MCF 10A (cell line): ENCODE measurements at regions of chr11 and their contacts with region 1.

Region 1: DNA sequence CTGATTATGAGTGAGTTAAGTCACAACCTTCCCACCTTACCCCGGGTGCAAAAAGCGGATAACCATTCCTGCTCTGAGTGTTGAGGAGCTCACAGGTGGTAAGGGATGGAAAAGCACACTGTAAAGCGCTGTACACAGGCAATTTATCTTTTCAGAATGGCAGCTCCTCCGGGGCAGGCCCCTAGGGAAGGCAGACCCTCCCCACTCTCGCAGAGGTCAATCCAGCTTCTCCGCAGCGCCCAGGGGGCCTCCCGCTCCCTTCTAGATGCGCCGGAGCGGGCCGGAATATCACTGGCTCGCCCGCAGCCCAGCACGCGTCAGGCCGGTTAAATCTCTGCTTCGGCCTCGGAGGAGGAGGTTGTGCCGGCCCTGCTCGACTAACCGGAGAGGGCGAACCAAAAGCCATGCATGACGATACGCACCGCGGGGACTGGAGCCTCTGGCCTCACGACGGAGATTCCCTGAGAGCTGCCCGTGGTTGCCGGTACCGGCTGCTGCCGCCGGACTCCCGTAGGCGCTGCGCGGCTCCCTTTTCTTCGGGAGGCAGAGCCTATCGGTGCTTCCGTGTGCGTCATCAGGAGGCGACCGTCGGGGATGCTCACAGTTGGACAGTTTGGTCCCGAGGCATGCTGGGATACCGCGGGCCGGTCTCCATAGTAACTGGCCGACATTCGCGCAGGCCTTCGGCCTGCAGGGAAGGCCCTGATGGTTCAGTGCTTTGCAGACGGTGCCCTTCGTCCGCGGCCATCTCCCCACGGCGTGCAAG is at the start of gene BRMS1:
- DNase-seq: peak; percentile 97
- H3K4me3 Mint-ChIP-seq: peak within 1 kb of the TSS; percentile 93
- H3K27ac Mint-ChIP-seq: peak within 1 kb of the TSS; percentile 93
- H3K4me1 Mint-ChIP-seq: peaks cover 23% of the 10 kb centered on the region
- H3K27me3 Mint-ChIP-seq: no peaks in the 10 kb centered on the region
- CTCF ChIP-seq: no peak
- total RNA-seq, gene BRMS1: 53.2 and 55.4 TPM in 2 replicates

Region 2: GRCh38 chr11:66268283-66268951 is 76.3 kb before region 1 on chr11 and contains the start of gene RAB1B:
- CTCF ChIA-PET with region 1: no interaction called
- POLR2A ChIA-PET with region 1: interaction called, 12 read pairs
- intact Hi-C with region 1: no loop called
- DNase-seq: peak; percentile 100
- H3K4me3 Mint-ChIP-seq: peak within 1 kb of the TSS; percentile 96
- H3K27ac Mint-ChIP-seq: peak within 1 kb of the TSS; percentile 91
- H3K4me1 Mint-ChIP-seq: peaks cover 2% of the 10 kb centered on the region
- H3K27me3 Mint-ChIP-seq: no peaks in the 10 kb centered on the region
- CTCF ChIP-seq: no peak
- total RNA-seq, gene RAB1B: 73.4 and 87.0 TPM in 2 replicates

Region 3: DNA sequence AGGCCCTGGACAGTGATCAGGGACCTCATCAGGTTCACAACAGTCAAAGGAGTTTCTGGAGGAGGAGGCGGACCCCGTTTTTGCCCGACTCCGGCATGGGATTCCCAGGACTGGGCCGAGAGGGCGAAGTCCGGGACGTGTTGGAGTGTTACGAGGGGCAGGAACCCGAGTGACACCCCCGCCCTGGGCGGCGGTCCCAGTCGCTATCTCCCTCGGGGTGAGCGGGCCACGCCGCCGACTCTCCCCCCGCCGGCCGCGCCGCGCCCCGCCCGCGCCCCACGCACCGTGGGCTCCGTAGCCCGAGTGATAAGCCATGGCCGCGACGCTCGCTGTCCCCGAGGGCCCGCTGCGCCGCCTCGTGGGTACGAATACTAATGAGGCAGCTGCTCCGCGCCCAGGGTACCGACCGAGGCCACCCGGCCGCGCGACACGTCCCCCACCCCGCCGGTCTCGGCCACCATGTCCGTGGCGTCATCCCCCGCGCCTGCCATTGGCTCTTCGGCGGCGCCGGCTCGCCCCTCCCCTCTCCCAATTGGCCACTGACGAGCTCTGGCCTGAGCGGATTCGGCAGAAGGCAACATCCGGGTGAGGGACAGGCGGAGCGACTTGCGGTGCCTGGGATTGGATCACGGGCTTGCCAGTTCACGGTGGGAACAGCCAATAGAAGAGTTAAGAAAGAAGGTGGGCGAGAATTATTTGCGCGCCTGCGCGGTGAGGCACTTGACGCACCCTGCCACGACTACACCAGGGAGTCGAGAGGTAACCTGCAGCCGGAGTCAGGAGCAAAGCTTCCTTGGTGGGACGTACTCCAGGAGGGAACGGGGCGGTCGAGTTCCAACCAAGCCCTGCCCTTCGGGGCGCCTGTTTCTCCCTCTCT is 55.8 kb before region 1 on chr11 and contains the start of gene YIF1A:
- CTCF ChIA-PET with region 1: interaction called, 4 read pairs
- POLR2A ChIA-PET with region 1: interaction called, 27 read pairs
- intact Hi-C with region 1: no loop called
- DNase-seq: peak; percentile 99
- H3K4me3 Mint-ChIP-seq: peak within 1 kb of the TSS; percentile 90
- H3K27ac Mint-ChIP-seq: peak within 1 kb of the TSS; percentile 95
- H3K4me1 Mint-ChIP-seq: peaks cover 12% of the 10 kb centered on the region
- H3K27me3 Mint-ChIP-seq: peaks cover 13% of the 10 kb centered on the region
- CTCF ChIP-seq: no peak
- total RNA-seq, gene YIF1A: 143 and 144 TPM in 2 replicates

Region 4: GRCh38 chr11:66311965-66312548 is 32.7 kb before region 1 on chr11:
- CTCF ChIA-PET with region 1: interaction called, 9 read pairs
- POLR2A ChIA-PET with region 1: interaction called, 32 read pairs
- intact Hi-C with region 1: no loop called
- DNase-seq: peak; percentile 92
- H3K4me3 Mint-ChIP-seq: peak overlapping the region; percentile 79
- H3K27ac Mint-ChIP-seq: peak overlapping the region; percentile 81
- H3K4me1 Mint-ChIP-seq: peaks cover 12% of the 10 kb centered on the region
- H3K27me3 Mint-ChIP-seq: no peaks in the 10 kb centered on the region
- CTCF ChIP-seq: peak; percentile 97

Region 5: DNA sequence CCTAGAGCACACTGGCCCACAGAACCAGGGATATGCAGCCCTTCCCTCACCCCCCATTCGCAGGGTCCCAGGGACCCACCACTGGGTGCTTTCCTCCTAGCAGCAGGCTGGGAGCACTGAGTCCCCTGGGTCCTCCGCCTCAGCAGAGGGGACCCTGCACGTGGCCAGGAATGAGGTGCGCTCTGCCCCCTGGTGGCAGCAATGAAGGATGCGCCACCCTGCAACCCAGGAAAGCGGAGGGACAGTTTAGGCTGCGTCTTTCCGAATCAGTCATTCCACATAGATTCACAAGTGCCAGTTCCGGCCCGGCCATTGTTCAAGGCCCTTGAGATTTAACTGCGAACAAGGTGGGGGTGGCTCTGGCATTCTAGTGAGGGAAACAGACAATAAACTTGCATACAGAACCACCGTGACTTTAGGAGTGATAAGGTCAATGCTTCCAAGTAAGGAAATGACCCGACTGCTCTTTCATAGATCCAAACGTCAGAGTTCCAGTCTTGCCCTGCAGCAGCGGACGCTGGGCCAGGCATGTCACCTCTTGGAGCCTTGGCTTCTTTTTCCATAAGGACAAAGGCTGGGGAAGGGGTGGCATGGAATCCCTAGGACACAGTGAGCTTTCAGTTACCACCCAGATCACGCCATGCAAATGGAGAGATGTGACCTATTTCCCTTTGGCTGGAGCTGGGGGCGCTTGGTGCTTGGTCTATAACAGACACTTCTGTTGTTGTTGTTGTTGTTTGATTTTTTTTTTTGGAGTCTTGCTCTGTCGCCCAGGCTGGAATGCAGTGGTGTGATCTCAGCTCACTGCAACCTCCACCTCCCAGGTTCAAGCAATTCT is 16.2 kb before region 1 on chr11:
- CTCF ChIA-PET with region 1: interaction called, 7 read pairs
- POLR2A ChIA-PET with region 1: interaction called, 11 read pairs
- intact Hi-C with region 1: no loop called
- DNase-seq: peak; percentile 78
- H3K4me3 Mint-ChIP-seq: no peak overlapping the region
- H3K27ac Mint-ChIP-seq: peak overlapping the region; percentile 4
- H3K4me1 Mint-ChIP-seq: peaks cover 46% of the 10 kb centered on the region
- H3K27me3 Mint-ChIP-seq: no peaks in the 10 kb centered on the region
- CTCF ChIP-seq: peak; percentile 91

Region 6: GRCh38 chr11:66363805-66364535 is 19.2 kb after region 1 on chr11:
- CTCF ChIA-PET with region 1: interaction called, 5 read pairs
- POLR2A ChIA-PET with region 1: interaction called, 11 read pairs
- intact Hi-C with region 1: no loop called
- DNase-seq: peak; percentile 47
- H3K4me3 Mint-ChIP-seq: no peak overlapping the region
- H3K27ac Mint-ChIP-seq: no peak overlapping the region
- H3K4me1 Mint-ChIP-seq: no peaks in the 10 kb centered on the region
- H3K27me3 Mint-ChIP-seq: no peaks in the 10 kb centered on the region
- CTCF ChIP-seq: peak; percentile 72

Region 7: DNA sequence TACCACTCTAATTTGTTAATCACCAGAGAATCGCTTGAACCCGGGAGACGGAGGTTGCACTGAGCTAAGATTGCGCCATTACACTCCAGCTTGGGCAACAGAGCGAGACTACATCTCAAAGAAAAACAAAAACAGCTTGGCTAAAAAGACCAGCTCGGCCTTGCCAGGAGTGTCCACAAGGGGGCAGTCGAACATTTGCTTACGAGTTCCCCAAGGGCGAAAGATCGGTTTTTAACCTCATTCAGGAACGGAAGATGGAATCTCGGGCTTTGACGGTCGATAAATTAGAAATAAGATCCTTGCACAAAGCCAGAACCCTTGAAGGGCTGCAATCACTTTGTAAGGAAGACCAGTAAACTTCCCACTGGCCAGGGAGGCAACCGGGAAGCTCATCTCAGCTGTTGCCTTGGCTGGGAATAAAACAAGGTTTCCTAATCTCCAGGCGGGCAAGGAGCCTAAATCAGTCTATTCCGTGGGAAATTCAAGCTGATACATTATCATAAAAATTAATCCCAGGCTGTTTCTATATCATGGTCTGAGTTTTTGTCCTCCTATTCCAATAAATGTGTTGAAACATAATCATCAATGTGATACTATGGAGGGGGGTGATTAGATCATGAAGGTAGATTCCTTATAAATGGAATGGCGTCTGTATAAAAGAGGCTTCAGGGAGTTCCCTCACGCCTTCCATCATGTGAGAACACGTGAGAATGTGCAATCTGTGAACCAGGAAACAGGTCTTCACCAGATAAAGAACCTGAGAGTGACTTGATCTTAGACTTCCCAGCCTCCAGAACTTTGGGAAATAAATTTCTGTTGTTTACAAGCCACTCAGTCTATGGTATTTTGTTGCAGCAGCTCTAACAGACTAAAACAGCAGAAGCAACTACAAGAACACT is 41.7 kb after region 1 on chr11:
- CTCF ChIA-PET with region 1: interaction called, 18 read pairs
- POLR2A ChIA-PET with region 1: interaction called, 6 read pairs
- intact Hi-C with region 1: loop called (anchors 2 kb)
- DNase-seq: peak; percentile 89
- H3K4me3 Mint-ChIP-seq: peak overlapping the region; percentile 38
- H3K27ac Mint-ChIP-seq: peak overlapping the region; percentile 21
- H3K4me1 Mint-ChIP-seq: peaks cover 6% of the 10 kb centered on the region
- H3K27me3 Mint-ChIP-seq: peaks cover 16% of the 10 kb centered on the region
- CTCF ChIP-seq: peak; percentile 77

Region 8: DNA sequence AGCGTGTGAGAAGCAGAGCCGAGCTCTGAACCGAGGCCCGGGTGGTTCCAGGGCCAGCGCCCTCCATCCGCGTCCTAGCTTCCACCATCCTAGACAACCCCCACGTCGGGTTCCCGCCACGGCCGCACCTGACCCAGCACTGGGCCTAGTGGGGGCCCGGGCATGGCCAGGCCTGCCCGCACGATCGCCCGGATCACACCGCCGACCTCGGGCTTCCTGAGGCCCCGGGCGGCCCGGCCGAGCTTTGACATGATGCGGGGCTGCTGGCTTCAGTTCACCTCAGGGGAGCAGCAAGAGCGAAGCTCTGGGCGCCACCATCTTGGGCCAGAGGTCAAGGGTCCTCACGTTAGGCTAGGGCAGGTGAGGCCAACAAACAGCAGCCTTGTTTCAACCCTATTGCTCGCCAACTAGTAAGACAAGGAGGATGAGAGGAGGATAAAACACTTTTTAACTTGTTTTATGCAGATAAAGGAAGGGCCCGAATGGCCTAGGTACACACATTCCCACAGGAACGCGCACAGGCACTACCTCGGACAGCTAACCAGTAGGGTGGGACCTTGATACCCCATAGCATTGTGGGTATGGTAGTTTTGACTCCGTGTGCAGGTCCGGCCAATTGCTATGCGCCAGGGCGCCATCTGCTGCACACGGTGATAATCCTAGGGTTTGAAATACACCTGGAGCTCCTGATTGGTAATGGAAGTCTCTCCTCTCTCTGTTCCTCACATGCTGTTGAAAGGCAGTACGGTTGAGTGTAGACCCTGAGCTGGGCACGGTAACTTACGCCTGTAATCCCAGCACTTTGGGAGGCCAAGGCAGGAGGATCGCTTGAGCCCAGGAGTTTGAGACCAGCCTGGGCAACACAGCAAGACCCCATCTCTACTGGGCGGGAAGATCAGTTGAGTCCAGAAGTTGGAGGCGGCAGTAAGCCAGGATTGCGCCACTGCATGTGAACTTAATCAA is 94.1 kb after region 1 on chr11 and contains the start of gene MRPL11:
- CTCF ChIA-PET with region 1: no interaction called
- POLR2A ChIA-PET with region 1: no interaction called
- intact Hi-C with region 1: no loop called
- DNase-seq: peak; percentile 95
- H3K4me3 Mint-ChIP-seq: peak within 1 kb of the TSS; percentile 84
- H3K27ac Mint-ChIP-seq: peak within 1 kb of the TSS; percentile 97
- H3K4me1 Mint-ChIP-seq: peaks cover 18% of the 10 kb centered on the region
- H3K27me3 Mint-ChIP-seq: no peaks in the 10 kb centered on the region
- CTCF ChIP-seq: peak; percentile 62
- total RNA-seq, gene MRPL11: 65.5 and 69.1 TPM in 2 replicates